Caco-2 (cell line): ENCODE measurements at regions of chr2 and their contacts with region 1.

Region 1: DNA sequence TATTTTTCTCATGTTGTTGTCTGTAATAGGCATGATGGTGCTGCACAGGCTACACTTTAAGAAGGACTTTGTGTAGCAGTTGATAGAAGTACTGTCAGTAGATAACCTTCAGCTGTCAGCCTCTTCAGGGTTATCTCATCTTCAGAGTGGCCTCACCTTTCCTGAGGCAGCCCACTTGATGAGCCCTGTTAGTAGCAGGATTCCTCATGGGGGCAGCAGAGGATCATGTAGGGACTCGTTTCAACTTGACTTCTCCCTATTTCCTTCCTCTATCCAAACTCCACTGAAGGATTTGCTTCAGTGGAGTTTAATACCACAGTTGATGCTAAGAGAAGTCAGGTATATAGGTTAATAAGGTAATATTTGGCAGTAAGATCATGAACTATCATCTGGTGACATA is 530.3 kb upstream of the FSIP2 start:
- DNase-seq: peak; percentile 77 to 78
- H3K4me3 ChIP-seq: no peak overlapping the region
- H3K4me3 Mint-ChIP-seq: no peak overlapping the region
- H3K27ac Mint-ChIP-seq: no peak overlapping the region
- H3K4me1 ChIP-seq: no peaks in the 10 kb centered on the region
- H3K4me1 Mint-ChIP-seq: no peaks in the 10 kb centered on the region
- H3K27me3 ChIP-seq: no peaks in the 10 kb centered on the region; the same call in 1 of the 2 replicates
- H3K27me3 Mint-ChIP-seq: no peaks in the 10 kb centered on the region
- CTCF ChIP-seq: peak; percentile 73 to 84

Region 2: DNA sequence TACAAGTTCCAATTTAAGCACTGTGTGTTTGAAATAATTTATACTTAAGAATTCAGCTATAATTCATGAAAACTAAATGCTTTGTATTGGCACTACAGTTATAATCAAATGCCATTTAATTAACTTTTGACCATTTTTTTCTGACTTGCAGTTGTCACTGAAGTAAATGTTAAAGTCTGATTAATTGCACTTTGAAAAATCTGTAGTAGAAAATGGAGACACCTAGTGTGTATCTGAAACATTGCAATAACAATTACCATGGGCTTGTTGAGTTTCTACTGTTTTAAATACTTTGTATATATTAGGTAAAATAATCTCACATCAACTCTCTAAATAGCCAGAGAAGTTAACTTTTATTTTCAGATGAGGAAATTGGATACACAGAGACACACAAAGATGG is 71.7 kb after region 1 on chr2:
- CTCF ChIA-PET with region 1: no interaction called
- POLR2A ChIA-PET with region 1: no interaction called
- intact Hi-C with region 1: loop called (anchors 1 kb)
- DNase-seq: no peak
- H3K4me3 ChIP-seq: no peak overlapping the region
- H3K4me3 Mint-ChIP-seq: no peak overlapping the region
- H3K27ac Mint-ChIP-seq: no peak overlapping the region
- H3K4me1 ChIP-seq: peaks cover 12% of the 10 kb centered on the region
- H3K4me1 Mint-ChIP-seq: peaks cover 4% of the 10 kb centered on the region
- H3K27me3 ChIP-seq: no peaks in the 10 kb centered on the region
- H3K27me3 Mint-ChIP-seq: no peaks in the 10 kb centered on the region
- CTCF ChIP-seq: peak; percentile 45 to 51

Region 3: GRCh38 chr2:185404578-185404977 is 196.3 kb after region 1 on chr2:
- CTCF ChIA-PET with region 1: no interaction called
- POLR2A ChIA-PET with region 1: no interaction called
- intact Hi-C with region 1: loop called (anchors 10 kb)
- DNase-seq: no peak
- H3K4me3 ChIP-seq: no peak overlapping the region
- H3K4me3 Mint-ChIP-seq: no peak overlapping the region
- H3K27ac Mint-ChIP-seq: no peak overlapping the region
- H3K4me1 ChIP-seq: no peaks in the 10 kb centered on the region
- H3K4me1 Mint-ChIP-seq: no peaks in the 10 kb centered on the region
- H3K27me3 ChIP-seq: no peaks in the 10 kb centered on the region
- H3K27me3 Mint-ChIP-seq: no peaks in the 10 kb centered on the region
- CTCF ChIP-seq: no peak